ENCODE measurements at regions of chr10 and their contacts with region 1.

Region 1: GRCh38 chr10:100433253-100434240 is 29.3 kb upstream of the WNT8B start:
- DNase-seq: peak; percentile 86 to 98
- H3K4me3 ChIP-seq: no peak overlapping the region
- H3K4me1 ChIP-seq: peaks cover 6% of the 10 kb centered on the region
- H3K27me3 ChIP-seq: no peaks in the 10 kb centered on the region

Region 2: GRCh38 chr10:100346765-100347567 is 86.6 kb before region 1 on chr10 and contains the start of gene SCD:
- in situ Hi-C with region 1: loop called (anchors 5 kb)
- DNase-seq: peak; percentile 96 to 98
- H3K4me3 ChIP-seq: peak within 1 kb of the TSS; percentile 95
- H3K4me1 ChIP-seq: peaks cover 28% of the 10 kb centered on the region
- H3K27me3 ChIP-seq: no peaks in the 10 kb centered on the region